Dendritic cell treated with granulocyte-macrophage colony-stimulating factor and Interleukin-4, amounts not matched to agents 40 ng/mL and 50 ng/mL, for 4 days (primary cell): ENCODE measurements at regions of chr21 and their contacts with region 1.

Region 1: DNA sequence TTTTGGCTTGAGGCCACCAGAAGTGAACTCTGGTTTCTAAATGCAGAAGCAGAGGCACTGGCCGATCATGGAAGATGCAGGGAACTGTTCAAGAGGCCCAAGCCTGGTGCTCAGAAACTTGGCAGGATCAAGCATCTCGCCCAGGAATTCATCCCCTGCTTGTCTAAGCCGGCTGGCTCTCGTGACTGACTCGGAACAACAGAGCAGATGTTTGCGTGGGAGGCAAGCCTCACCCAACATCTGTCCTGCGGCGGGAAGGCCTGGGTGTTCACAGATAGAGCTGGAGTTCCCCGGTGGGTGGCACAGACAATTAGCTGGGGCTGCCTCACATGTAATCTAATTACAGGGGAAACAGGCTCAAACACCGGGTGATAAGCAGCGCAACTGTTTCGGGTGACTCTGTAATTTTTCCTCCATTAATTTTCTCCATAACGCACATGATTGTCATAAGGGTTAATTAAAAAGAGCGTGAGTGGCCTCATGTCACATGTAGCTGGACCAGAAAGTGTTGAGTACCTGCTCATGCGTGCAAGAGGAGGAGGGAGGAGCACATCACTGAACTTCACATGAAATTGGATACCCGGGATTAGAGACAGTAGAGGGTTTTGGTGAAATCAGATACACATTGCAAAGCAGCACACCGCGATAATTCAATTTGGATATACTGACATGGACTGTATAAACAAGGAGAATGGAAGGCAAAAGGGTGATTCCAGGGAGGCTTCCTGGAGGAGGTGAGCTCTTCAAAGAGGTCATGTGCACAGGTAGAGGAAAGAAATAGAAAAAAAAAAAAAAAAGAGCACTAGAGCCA is 180.0 kb downstream of the ETS2 start:
- H3K4me3 Mint-ChIP-seq: no peak overlapping the region
- H3K27ac Mint-ChIP-seq: peak overlapping the region; percentile 77
- H3K4me1 Mint-ChIP-seq: peaks cover 43% of the 10 kb centered on the region
- H3K27me3 Mint-ChIP-seq: peaks cover 68% of the 10 kb centered on the region

Region 2: GRCh38 chr21:38999161-38999560 is 13.4 kb after region 1 on chr21:
- intact Hi-C with region 1: loop called (anchors 2 kb)
- H3K4me3 Mint-ChIP-seq: no peak overlapping the region
- H3K27ac Mint-ChIP-seq: peak overlapping the region; percentile 82
- H3K4me1 Mint-ChIP-seq: peaks cover 92% of the 10 kb centered on the region
- H3K27me3 Mint-ChIP-seq: peaks cover 35% of the 10 kb centered on the region